ENCODE measurements at regions of chr13 and their contacts with region 1.

Region 1: GRCh38 chr13:109479991-109480691 is 306.2 kb downstream of the IRS2 start:
- DNase-seq: no peak
- H3K4me3 Mint-ChIP-seq: no peak overlapping the region
- H3K27ac Mint-ChIP-seq: no peak overlapping the region
- H3K4me1 Mint-ChIP-seq: no peaks in the 10 kb centered on the region
- H3K27me3 Mint-ChIP-seq: peaks cover 2% of the 10 kb centered on the region

Region 2: GRCh38 chr13:109874484-109875454 is 394.6 kb after region 1 on chr13:
- CTCF ChIA-PET with region 1: no interaction called
- POLR2A ChIA-PET with region 1: no interaction called
- intact Hi-C with region 1: loop called (anchors 5 kb)
- DNase-seq: no peak
- H3K4me3 Mint-ChIP-seq: no peak overlapping the region
- H3K27ac Mint-ChIP-seq: no peak overlapping the region
- H3K4me1 Mint-ChIP-seq: no peaks in the 10 kb centered on the region
- H3K27me3 Mint-ChIP-seq: peaks cover 13% of the 10 kb centered on the region